Activated B cell treated with CpG ODN at 0.5 μM for 24 hours (primary cell): ENCODE measurements at regions of chr9 and their contacts with region 1.

Region 1: GRCh38 chr9:69174616-69175463 is 763 bp downstream of the TJP2 start:
- DNase-seq: peak; percentile 19
- ATAC-seq: peak; percentile 68
- H3K4me3 Mint-ChIP-seq: peak overlapping the region; percentile 84
- H3K27ac Mint-ChIP-seq: no peak overlapping the region
- H3K4me1 Mint-ChIP-seq: peaks cover 33% of the 10 kb centered on the region
- H3K27me3 Mint-ChIP-seq: peaks cover 37% of the 10 kb centered on the region
- CTCF ChIP-seq: no peak

Region 2: DNA sequence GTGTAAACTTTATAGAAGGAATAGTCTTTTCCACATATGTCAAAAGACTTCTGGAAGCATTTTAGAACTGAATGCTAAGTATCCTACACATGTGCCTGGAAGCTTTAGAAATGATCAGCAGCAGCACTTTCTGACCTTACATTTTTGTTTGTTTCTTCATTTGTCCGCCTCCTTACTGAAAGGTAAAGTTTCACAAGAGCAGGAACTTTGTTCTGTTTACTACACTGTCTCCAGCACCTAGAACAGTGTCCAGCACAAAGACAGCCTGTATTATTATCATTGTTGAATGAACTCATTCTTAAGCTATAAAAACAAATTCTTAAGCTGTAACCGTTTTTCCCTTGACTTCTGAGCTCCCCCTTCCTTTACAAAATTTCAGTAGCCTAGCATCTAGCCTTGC is 455.0 kb before region 1 on chr9:
- CTCF ChIA-PET with region 1: no interaction called
- POLR2A ChIA-PET with region 1: no interaction called
- intact Hi-C with region 1: loop called (anchors 5 kb)
- DNase-seq: no peak
- ATAC-seq: no peak
- H3K4me3 Mint-ChIP-seq: no peak overlapping the region
- H3K27ac Mint-ChIP-seq: no peak overlapping the region
- H3K4me1 Mint-ChIP-seq: peaks cover 39% of the 10 kb centered on the region
- H3K27me3 Mint-ChIP-seq: no peaks in the 10 kb centered on the region
- CTCF ChIP-seq: no peak

Region 3: DNA sequence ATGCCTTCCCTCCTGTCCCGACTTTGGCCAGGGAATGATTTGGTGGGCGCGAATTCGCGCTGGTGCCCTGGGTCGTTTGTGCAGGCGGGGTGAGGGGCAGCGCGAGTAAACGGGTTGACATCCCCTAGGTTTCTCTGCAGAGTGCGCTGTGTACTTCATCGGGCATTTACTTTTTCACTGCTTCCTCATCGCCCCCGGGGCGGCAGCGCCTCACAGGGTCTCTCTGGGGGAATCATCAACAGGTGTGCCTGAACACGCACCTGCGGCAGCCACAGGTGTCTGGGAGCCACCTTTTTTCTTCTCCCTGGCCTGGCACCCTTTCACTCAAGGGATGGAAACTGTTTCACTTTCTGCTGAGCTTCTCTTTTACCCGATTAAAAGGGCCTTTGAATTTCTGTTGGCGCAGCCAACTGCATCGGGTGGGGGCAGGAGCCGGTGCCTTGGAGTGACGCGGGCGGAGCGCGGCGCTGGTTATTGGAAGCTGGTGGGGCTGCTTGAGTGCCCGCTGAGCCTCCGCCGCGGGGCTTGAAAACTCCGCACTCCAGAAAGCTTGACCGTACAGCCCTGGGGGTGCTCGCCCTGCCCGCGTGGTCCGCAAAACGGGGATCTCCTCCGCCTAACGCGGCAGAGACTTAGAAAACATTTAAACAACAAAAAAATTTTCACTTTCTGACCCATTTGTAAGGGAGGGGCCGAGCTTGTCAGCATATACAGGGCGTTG is 52.9 kb before region 1 on chr9:
- CTCF ChIA-PET with region 1: no interaction called
- POLR2A ChIA-PET with region 1: interaction called, 3 read pairs
- intact Hi-C with region 1: loop called (anchors 5 kb)
- DNase-seq: peak; percentile 45
- ATAC-seq: peak; percentile 74
- H3K4me3 Mint-ChIP-seq: peak overlapping the region; percentile 92
- H3K27ac Mint-ChIP-seq: peak overlapping the region; percentile 30
- H3K4me1 Mint-ChIP-seq: peaks cover 18% of the 10 kb centered on the region
- H3K27me3 Mint-ChIP-seq: no peaks in the 10 kb centered on the region
- CTCF ChIP-seq: no peak